ENCODE measurements at regions of chr20 and their contacts with region 1.

Region 1: GRCh38 chr20:25017257-25018115 is 24.9 kb upstream of the APMAP start:
- DNase-seq: peak; percentile 87
- H3K4me3 ChIP-seq: no peak overlapping the region
- H3K27ac ChIP-seq: no peak overlapping the region
- H3K4me1 ChIP-seq: peaks cover 15% of the 10 kb centered on the region
- H3K27me3 ChIP-seq: no peaks in the 10 kb centered on the region
- CTCF ChIP-seq: peak in 1 of 2 donors; percentile 20

Region 2: DNA sequence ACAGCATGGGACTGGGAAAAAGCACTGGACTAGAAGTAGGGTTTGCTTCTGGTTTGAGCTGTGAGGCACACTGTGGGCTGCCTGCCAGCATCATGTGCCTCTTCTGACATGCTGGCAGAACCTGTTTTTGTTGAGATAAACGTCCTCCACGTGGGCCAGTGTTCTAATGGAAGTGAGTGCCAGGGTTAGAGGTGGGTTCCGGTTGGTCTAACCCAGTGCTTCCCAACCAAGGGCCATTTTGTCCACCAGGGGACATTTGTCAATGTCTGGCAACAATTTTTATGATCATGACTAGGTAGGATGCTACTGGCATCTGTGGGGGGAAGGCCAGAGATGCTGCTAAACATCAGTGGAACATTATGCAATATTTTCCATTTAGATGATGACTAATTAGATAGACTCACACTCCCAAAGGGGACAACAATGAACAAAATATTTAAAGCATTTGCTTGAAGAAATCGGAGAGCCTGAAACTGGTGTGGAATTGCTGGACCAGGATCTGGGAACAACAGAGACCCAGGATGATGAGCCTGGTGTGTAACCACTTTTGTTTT is 17.1 kb before region 1 on chr20:
- CTCF ChIA-PET with region 1: no interaction called
- dilution Hi-C with region 1: no loop called
- in situ Hi-C with region 1: no loop called
- intact Hi-C with region 1: loop called (anchors 2 kb)
- DNase-seq: peak; percentile 89
- H3K4me3 ChIP-seq: no peak overlapping the region
- H3K27ac ChIP-seq: no peak overlapping the region
- H3K4me1 ChIP-seq: peaks cover 13% of the 10 kb centered on the region
- H3K27me3 ChIP-seq: no peaks in the 10 kb centered on the region
- CTCF ChIP-seq: peak; percentile 6 to 28

Measured in mammary epithelial cell (primary cell).